WTC11 (cell line): ENCODE measurements at regions of chr2 and their contacts with region 1.

Region 1: GRCh38 chr2:26922405-26923188 is 47.8 kb upstream of the MAPRE3 start:
- DNase-seq: peak; percentile 73
- ATAC-seq: peak; percentile 90
- H3K4me3 Mint-ChIP-seq: no peak overlapping the region
- H3K27ac Mint-ChIP-seq: no peak overlapping the region
- H3K4me1 Mint-ChIP-seq: peaks cover 13% of the 10 kb centered on the region
- H3K27me3 Mint-ChIP-seq: no peaks in the 10 kb centered on the region
- CTCF ChIP-seq: peak; percentile 28; the same call in 1 of the 2 replicates

Region 2: DNA sequence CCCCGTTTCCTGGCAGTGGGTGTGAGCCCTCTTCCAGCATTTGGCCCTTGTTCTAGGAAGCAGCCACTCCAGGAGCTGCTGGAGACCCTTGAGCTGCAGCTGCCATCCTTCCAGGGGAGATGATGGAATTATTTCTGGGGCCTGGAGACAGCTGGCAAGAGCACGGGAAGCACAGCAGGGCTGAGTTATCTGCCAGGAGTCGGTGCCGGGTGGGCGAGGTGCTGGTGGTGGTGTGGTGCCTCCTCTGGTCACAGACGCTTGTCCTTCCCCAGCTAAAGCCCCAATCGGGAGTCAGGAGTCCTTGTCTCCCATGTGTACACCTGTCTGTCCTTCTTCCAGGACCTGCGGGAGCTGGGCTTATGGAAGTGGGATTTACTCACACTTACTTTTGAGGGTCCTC is 38.6 kb before region 1 on chr2:
- CTCF ChIA-PET with region 1: interaction called, 10 read pairs
- POLR2A ChIA-PET with region 1: interaction called, 6 read pairs
- DNase-seq: no peak
- ATAC-seq: no peak; the same call in 1 of the 2 replicates
- H3K4me3 Mint-ChIP-seq: no peak overlapping the region
- H3K27ac Mint-ChIP-seq: no peak overlapping the region
- H3K4me1 Mint-ChIP-seq: peaks cover 6% of the 10 kb centered on the region
- H3K27me3 Mint-ChIP-seq: no peaks in the 10 kb centered on the region
- CTCF ChIP-seq: no peak

Region 3: GRCh38 chr2:26901326-26902183 is 21.0 kb before region 1 on chr2:
- CTCF ChIA-PET with region 1: interaction called, 11 read pairs
- POLR2A ChIA-PET with region 1: no interaction called
- DNase-seq: peak; percentile 69
- ATAC-seq: peak; percentile 77
- H3K4me3 Mint-ChIP-seq: peak overlapping the region; percentile 49
- H3K27ac Mint-ChIP-seq: no peak overlapping the region; the same call in 1 of the 2 replicates
- H3K4me1 Mint-ChIP-seq: peaks cover 25% of the 10 kb centered on the region
- H3K27me3 Mint-ChIP-seq: peaks cover 9% of the 10 kb centered on the region
- CTCF ChIP-seq: no peak

Region 4: DNA sequence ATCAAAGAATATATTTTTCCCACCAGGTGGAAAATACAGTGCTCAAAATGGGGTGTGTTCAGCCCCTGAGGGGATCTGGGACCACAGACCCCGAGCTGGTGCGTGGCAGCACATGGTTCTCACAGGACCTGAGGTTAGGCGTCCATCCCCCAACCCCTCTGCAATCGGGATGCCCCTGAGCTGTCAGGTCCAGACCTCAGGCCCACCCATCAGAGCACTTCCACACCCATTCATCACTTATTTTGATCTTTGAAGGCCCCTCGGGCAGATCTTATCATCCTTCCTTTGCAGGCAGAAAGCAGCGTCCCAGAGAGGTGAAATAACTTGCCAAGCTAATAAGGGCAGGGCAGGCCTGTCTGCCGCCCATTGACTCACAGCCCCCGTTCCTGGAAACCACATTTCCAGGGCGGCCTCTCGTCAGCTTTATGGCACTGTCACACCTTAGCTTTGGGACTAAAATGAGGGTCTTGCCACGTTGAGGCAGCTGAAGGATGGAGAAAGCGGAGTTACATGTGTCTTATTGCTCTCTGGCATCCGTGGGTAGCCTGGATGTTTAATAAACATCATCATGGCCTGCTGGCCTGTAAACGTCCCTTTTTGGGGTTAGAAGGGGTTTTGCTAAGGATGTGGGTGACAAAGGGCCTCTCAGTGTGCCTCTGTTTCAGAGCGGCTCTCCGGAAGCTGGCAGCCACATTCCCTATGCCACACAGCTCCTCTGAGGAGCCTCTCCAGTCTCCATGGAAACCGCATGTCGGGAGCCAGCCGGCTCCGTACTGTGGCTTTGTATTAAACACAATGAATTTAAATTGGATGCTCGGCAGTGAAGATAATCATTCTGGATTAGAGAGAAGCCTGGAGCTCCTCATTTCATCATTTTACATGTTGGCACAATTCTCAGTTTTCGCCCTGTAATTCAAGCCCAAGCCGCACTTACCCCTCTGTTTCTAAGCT is 10.4 kb before region 1 on chr2:
- CTCF ChIA-PET with region 1: interaction called, 37 read pairs
- POLR2A ChIA-PET with region 1: no interaction called
- DNase-seq: peak; percentile 45
- ATAC-seq: peak; percentile 86
- H3K4me3 Mint-ChIP-seq: peak overlapping the region; percentile 33
- H3K27ac Mint-ChIP-seq: no peak overlapping the region
- H3K4me1 Mint-ChIP-seq: peaks cover 28% of the 10 kb centered on the region
- H3K27me3 Mint-ChIP-seq: peaks cover 3% of the 10 kb centered on the region; the same call in 1 of the 2 replicates
- CTCF ChIP-seq: no peak

Region 5: DNA sequence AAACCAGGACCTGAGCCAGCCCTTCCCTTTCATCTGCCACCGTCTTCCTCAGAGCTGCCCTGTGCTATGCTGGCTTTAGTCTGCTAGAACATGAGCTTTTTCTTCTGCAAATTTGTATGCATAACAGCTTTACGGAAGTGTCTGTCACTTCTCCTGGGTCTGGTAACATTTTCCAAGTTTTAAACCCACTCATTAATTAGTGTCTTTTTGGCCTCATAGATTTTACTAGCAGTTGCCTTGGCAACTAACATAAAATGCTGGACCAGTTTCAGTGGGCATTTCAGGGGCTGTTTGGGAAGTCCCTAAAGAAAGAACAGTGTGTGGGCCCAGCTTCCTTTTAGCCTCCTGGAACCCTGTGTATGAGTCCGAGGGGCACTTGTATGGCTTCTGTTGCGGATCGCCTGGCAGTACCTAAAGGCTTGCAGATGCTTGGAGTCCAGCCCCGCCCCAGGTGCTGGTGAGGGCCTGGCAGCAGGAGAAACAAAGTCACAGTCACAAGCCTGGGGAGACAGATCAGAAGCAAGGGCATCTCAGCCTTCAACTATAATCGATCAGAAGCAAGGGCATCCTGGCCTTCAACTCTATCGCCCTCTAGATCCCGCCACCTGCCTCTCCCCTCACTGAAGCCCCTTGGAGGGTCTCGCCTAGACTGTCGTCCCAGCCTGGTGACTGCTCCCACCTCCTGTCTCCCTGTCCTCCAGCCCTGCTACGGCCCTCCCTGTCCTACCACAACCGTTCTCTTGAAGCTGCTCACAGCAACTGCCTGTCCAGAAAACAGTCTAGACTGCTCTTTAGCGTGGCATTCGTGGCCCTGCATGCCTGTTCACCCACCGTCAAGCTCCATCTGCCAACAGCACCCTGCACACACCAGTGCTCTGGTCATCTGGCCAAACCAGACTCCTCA is 11.1 kb after region 1 on chr2:
- CTCF ChIA-PET with region 1: interaction called, 24 read pairs
- POLR2A ChIA-PET with region 1: no interaction called
- DNase-seq: no peak
- ATAC-seq: no peak
- H3K4me3 Mint-ChIP-seq: no peak overlapping the region
- H3K27ac Mint-ChIP-seq: no peak overlapping the region
- H3K4me1 Mint-ChIP-seq: no peaks in the 10 kb centered on the region
- H3K27me3 Mint-ChIP-seq: no peaks in the 10 kb centered on the region
- CTCF ChIP-seq: no peak

Region 6: DNA sequence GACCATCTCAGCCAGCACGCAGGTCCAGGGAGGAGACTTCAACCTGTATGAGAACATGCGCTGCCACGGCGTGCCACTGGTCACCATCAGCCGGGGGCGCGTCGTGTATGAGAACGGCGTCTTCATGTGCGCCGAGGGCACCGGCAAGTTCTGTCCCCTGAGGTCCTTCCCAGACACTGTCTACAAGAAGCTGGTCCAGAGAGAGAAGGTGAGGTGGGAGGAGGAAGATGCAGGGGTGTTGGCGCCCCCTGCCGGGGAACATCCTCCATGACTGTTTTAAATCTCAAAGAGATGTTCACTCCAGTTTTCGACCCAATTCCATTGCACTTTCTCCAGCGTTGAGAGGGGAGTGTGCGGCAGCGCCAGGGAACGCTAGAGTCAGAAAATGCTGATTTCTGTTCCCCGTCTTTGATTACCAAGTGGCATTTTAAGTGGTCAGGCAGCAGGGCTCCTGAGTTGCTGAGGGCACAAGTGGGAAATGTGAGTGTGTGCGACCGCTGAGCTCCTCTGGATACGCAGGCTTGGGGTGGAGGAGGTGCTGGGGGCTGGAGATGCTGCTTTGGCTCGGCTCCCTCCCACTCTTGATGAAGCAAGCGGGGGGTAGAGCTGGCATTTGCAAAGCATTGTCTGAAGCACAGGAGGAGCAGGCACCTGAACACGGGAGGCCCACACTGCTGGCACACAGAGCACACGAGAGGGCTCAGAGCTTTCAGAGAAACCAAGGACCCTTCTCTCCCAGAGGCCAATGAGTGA is 20.1 kb after region 1 on chr2:
- CTCF ChIA-PET with region 1: interaction called, 45 read pairs
- POLR2A ChIA-PET with region 1: no interaction called
- DNase-seq: peak; percentile 87
- ATAC-seq: peak; percentile 78
- H3K4me3 Mint-ChIP-seq: peak overlapping the region; percentile 86
- H3K27ac Mint-ChIP-seq: no peak overlapping the region
- H3K4me1 Mint-ChIP-seq: peaks cover 16% of the 10 kb centered on the region
- H3K27me3 Mint-ChIP-seq: peaks cover 29% of the 10 kb centered on the region
- CTCF ChIP-seq: peak; percentile 96

Region 7: GRCh38 chr2:27003857-27004256 is 81.3 kb after region 1 on chr2:
- CTCF ChIA-PET with region 1: no interaction called
- POLR2A ChIA-PET with region 1: no interaction called
- DNase-seq: no peak
- ATAC-seq: no peak
- H3K4me3 Mint-ChIP-seq: no peak overlapping the region
- H3K27ac Mint-ChIP-seq: no peak overlapping the region
- H3K4me1 Mint-ChIP-seq: peaks cover 6% of the 10 kb centered on the region
- H3K27me3 Mint-ChIP-seq: no peaks in the 10 kb centered on the region
- CTCF ChIP-seq: no peak